Cardiac septum (tissue), 1 donor: ENCODE measurements at regions of chr22 and their contacts with region 1.

Region 1: DNA sequence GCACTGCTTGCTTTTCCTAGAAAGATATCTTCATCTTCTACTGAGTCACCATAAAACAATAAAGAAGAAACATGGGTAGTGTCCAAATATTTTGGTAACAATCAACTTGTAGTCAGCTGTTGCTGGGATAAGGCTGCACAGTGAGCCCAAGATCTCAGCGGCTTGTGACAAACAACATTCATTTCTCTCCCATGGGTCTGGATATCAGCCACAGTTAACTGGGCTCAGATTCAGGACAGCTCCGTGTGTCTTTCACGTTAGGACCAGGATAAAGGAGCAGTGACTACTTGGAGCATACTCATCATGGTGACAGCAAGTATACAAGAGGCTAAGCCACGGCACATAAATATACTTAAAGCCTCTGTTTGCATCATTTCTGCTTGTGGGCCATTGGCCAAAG is 27.9 kb upstream of the GRK3 start:
- DNase-seq: no peak

Region 2: DNA sequence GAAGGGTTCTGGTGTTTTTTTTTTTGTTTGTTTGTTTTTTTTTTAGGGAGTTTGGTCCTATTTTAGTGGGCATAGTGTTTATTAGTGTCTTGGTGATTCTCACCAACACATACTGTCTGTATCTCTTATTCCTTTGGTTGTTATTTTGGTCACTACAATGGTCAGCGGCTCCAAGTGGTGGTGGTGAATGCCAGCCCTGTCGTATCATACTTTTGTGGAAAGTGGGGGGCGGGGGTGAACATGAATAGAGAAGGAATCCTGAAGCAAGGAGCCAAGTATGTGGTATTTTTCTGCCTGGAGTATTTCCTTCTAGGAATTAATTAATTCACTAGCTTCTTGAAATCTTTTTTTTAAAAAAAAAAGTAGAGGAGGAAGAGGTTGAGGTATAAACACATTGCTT is 107.5 kb after region 1 on chr22:
- intact Hi-C with region 1: loop called (anchors 1 kb)
- DNase-seq: no peak

Region 3: GRCh38 chr22:25780673-25781072 is 244.1 kb after region 1 on chr22:
- intact Hi-C with region 1: no loop called
- DNase-seq: no peak